A673 (cell line): ENCODE measurements at regions of chr7 and their contacts with region 1.

Region 1: DNA sequence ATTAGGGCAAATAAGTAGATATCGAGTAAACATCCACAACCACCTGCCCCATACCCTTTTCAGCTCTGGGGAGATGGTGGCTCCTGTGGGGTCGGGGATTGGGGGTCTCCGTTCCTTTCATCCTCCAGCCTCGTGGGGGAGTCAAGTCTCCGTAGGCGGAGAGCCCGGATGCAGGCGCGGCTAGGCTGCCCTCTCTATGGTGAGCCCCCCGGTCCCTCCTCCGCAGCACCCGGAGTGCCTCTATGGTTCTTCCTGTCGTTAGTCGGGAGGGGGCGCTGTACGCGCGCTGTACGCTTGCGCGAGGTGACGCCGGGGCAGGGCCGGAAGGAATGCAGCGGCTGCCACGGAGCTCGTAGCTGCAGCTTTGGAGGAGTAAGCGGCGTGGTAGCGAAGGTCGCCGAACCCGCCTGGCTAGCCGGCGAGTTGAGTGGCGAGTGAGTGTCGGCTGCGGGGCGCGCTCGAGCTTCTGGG is 14.8 kb upstream of the MMD2 start:
- DNase-seq: peak; percentile 97
- H3K4me3 ChIP-seq: peak overlapping the region; percentile 90
- H3K27ac ChIP-seq: peak overlapping the region; percentile 92
- H3K4me1 ChIP-seq: peaks cover 3% of the 10 kb centered on the region
- H3K27me3 ChIP-seq: no peaks in the 10 kb centered on the region
- CTCF ChIP-seq: peak; percentile 96

Region 2: DNA sequence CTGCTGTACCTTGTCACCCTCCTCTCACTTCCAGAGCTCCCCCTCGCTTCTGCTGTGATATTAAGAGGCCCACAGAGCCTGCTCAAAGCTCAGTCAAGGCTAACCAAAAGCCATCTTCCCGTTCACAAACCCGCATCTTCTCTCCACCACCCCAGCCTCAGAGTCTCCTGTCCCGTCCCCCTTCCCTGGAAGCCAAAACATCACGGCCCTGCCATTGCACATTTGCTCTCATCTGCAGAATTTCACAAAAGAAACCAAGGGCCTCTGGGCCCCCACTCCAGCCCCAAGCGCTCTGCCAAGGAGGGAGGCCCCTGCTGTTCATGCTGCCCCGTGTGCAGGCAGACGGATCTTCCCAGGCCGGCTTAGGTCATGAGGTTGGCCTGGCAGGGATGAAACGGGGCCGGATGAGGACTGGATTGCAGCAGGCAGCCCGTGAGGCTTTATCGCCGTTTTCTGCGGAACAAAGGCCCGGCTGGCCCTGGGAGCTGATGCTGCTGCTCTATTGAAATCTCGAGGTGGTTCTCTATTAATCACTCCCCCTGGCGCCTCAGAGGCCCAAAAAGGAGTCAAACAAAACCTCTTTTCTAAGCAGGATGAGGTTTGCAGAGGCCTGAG is 323.2 kb before region 1 on chr7:
- CTCF ChIA-PET with region 1: no interaction called
- POLR2A ChIA-PET with region 1: no interaction called
- intact Hi-C with region 1: no loop called
- DNase-seq: no peak
- H3K4me3 ChIP-seq: no peak overlapping the region
- H3K27ac ChIP-seq: peak overlapping the region; percentile 47
- H3K4me1 ChIP-seq: peaks cover 14% of the 10 kb centered on the region
- H3K27me3 ChIP-seq: no peaks in the 10 kb centered on the region
- CTCF ChIP-seq: no peak

Region 3: DNA sequence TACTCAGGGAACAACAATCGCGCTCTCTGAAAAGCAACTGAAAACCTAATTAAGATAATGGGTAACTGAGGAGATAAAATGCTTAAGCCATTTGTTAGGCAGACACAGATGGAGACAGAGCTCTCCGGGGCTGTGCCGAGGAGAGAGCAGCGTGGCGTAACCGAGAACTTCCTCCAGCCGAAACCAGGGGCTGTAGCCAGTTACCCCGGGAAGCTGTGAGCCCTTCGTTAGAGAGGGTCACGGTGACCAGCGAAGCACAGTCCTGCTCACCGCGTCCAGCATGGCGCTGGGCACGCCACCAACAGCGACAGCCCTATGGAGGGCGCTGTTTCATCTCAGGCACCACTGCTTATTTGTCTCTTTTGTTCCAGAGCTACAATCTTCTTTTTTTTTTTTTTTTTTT is 128.0 kb before region 1 on chr7:
- CTCF ChIA-PET with region 1: interaction called, 10 read pairs
- POLR2A ChIA-PET with region 1: no interaction called
- intact Hi-C with region 1: no loop called
- DNase-seq: peak; percentile 19
- H3K4me3 ChIP-seq: peak overlapping the region; percentile 21
- H3K27ac ChIP-seq: no peak overlapping the region
- H3K4me1 ChIP-seq: no peaks in the 10 kb centered on the region
- H3K27me3 ChIP-seq: no peaks in the 10 kb centered on the region
- CTCF ChIP-seq: peak; percentile 46

Region 4: DNA sequence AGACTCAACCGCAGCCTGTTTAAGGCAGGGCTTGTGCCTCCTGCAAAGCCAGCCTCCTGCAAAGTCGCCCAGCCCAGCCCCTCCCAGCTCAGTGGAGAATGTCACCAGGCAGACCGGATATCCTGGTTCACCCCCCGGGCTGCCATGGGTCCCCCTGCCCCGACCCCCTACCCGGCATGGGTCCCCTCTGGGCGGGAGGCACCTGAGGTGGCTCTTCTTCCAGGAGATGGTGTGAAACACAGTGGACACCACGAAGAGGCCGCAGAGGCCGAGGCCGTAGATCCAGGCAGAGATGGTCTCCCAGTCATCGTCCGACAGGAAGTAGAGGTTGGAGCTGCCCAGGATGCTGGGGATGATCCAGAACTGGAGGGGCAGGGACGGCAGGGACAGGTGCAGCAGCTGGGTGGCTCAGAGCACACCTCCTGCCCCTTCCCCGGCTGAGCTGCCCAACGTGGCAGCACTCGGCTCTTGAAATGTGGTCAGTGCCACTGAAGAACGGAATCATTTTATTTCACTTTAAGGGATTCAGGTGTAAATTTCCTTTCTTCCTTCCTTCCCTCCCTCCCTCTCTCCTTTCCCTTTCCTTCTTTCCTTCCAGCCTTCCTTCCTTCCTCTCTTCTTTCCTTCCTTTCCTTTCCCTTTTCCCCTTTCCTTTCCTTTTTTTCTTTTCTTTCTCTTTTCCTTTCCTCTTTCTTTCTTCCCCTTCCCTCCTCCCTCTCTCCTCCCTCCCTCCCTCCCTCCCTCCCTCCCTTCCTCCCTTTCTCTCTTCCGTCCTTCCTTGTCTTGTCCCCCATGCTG is 53.6 kb before region 1 on chr7:
- CTCF ChIA-PET with region 1: no interaction called
- POLR2A ChIA-PET with region 1: no interaction called
- intact Hi-C with region 1: no loop called
- DNase-seq: no peak
- H3K4me3 ChIP-seq: no peak overlapping the region
- H3K27ac ChIP-seq: no peak overlapping the region
- H3K4me1 ChIP-seq: no peaks in the 10 kb centered on the region
- H3K27me3 ChIP-seq: peaks cover 7% of the 10 kb centered on the region
- CTCF ChIP-seq: no peak

Region 5: GRCh38 chr7:5088906-5089305 is 115.1 kb after region 1 on chr7:
- CTCF ChIA-PET with region 1: interaction called, 20 read pairs
- POLR2A ChIA-PET with region 1: no interaction called
- intact Hi-C with region 1: loop called (anchors 5 kb)
- DNase-seq: no peak
- H3K4me3 ChIP-seq: no peak overlapping the region
- H3K27ac ChIP-seq: no peak overlapping the region
- H3K4me1 ChIP-seq: no peaks in the 10 kb centered on the region
- H3K27me3 ChIP-seq: peaks cover 4% of the 10 kb centered on the region
- CTCF ChIP-seq: no peak